ENCODE measurements at regions of chr5 and their contacts with region 1.

Region 1: GRCh38 chr5:172006321-172007174 is at the start of gene FBXW11:
- DNase-seq: peak; percentile 98
- H3K27ac ChIP-seq: peak within 1 kb of the TSS; percentile 96
- CTCF ChIP-seq: no peak

Region 2: GRCh38 chr5:171913987-171914273 is 92.6 kb before region 1 on chr5:
- CTCF ChIA-PET with region 1: interaction called, 9 read pairs
- POLR2A ChIA-PET with region 1: interaction called, 10 read pairs
- DNase-seq: no peak
- H3K27ac ChIP-seq: no peak overlapping the region
- CTCF ChIP-seq: no peak

Region 3: DNA sequence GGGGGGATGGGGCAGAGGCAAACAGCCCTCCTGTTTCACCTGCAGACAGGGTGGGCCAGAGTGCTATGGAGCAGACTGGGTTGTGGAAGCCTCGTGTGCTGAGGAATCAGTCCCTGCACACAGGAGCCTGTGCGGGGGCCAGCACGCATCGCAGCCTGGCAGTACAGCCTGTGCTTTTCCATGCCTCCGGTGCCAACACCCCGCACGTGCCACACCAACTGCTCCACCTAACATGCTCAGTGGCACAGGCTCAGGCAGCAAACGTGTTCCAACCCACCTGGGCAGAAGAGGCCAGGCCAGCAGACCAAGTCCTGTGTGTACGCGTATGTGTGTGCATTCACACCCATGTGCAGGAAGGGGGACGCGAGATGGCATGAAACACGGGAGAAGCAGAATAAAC is 37.3 kb after region 1 on chr5:
- CTCF ChIA-PET with region 1: no interaction called
- POLR2A ChIA-PET with region 1: no interaction called
- DNase-seq: no peak
- H3K27ac ChIP-seq: no peak overlapping the region
- CTCF ChIP-seq: no peak

Measured in RWPE1 (cell line).